Activated CD4-positive, alpha-beta T cell treated with anti-CD3 and anti-CD28 coated beads, Interleukin-2, amount 10 ng/mL, durations not matched to agents 7 days and 5 days (primary cell): ENCODE measurements at regions of chr17 and their contacts with region 1.

Region 1: GRCh38 chr17:58200017-58200633 is 7.6 kb downstream of the EPX start:
- DNase-seq: peak; percentile 57
- H3K4me3 Mint-ChIP-seq: no peak overlapping the region
- H3K27ac Mint-ChIP-seq: no peak overlapping the region
- H3K4me1 Mint-ChIP-seq: no peaks in the 10 kb centered on the region
- H3K27me3 Mint-ChIP-seq: peaks cover 2% of the 10 kb centered on the region

Region 2: GRCh38 chr17:58174882-58175281 is 25.2 kb before region 1 on chr17:
- CTCF ChIA-PET with region 1: no interaction called
- POLR2A ChIA-PET with region 1: no interaction called
- DNase-seq: no peak
- H3K4me3 Mint-ChIP-seq: no peak overlapping the region
- H3K27ac Mint-ChIP-seq: no peak overlapping the region
- H3K4me1 Mint-ChIP-seq: peaks cover 27% of the 10 kb centered on the region
- H3K27me3 Mint-ChIP-seq: peaks cover 13% of the 10 kb centered on the region

Region 3: GRCh38 chr17:58210922-58211321 is 10.8 kb after region 1 on chr17:
- CTCF ChIA-PET with region 1: interaction called, 33 read pairs
- POLR2A ChIA-PET with region 1: no interaction called
- DNase-seq: no peak
- H3K4me3 Mint-ChIP-seq: no peak overlapping the region
- H3K27ac Mint-ChIP-seq: no peak overlapping the region
- H3K4me1 Mint-ChIP-seq: peaks cover 5% of the 10 kb centered on the region
- H3K27me3 Mint-ChIP-seq: no peaks in the 10 kb centered on the region

Region 4: GRCh38 chr17:58219001-58219788 is 19.1 kb after region 1 on chr17 and contains the start of gene MKS1:
- CTCF ChIA-PET with region 1: interaction called, 33 read pairs
- POLR2A ChIA-PET with region 1: no interaction called
- DNase-seq: peak; percentile 95
- H3K4me3 Mint-ChIP-seq: peak within 1 kb of the TSS; percentile 92
- H3K27ac Mint-ChIP-seq: peak within 1 kb of the TSS; percentile 97
- H3K4me1 Mint-ChIP-seq: peaks cover 26% of the 10 kb centered on the region
- H3K27me3 Mint-ChIP-seq: peaks cover 9% of the 10 kb centered on the region
- total RNA-seq, gene MKS1: 17.6 to 18.5 TPM

Region 5: DNA sequence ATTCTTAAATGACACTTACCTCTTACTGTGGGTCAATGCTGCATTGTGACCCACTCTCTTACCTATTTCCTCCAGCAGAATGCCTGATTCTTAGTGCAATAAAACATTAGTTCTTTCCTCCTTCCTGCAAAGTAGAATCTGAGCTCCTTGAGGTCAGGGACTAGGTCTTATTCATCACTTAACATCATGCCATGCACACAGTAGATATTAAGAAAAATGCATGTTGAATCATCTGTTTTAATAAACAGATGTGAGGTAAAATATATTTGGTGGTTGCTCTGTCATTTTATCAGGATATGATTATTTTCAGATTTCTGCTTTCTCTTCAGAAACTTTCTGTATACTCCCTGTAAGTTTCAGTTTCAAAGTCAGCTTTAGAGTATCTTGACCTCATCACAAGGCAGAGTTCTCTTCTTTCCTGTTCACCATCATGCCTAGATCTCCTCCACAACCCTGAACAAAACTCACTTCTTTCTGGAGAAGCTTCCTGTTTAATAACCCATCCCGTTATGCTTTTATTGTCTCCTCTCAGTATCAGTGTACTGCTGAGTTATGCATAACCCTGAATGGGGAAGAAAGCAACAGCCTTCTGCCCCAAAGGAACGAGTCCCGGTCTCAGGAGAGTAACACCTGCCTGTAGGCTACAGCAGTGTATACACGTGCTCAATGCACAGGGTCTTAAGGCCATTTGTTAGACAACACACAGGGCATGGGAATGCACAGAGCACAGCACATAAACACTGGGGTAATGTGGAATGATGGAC is 182.2 kb after region 1 on chr17:
- CTCF ChIA-PET with region 1: no interaction called
- POLR2A ChIA-PET with region 1: no interaction called
- DNase-seq: no peak
- H3K4me3 Mint-ChIP-seq: peak overlapping the region; percentile 35
- H3K27ac Mint-ChIP-seq: peak overlapping the region; percentile 81
- H3K4me1 Mint-ChIP-seq: peaks cover 55% of the 10 kb centered on the region
- H3K27me3 Mint-ChIP-seq: no peaks in the 10 kb centered on the region